ENCODE measurements at regions of chr5 and their contacts with region 1.

Region 1: DNA sequence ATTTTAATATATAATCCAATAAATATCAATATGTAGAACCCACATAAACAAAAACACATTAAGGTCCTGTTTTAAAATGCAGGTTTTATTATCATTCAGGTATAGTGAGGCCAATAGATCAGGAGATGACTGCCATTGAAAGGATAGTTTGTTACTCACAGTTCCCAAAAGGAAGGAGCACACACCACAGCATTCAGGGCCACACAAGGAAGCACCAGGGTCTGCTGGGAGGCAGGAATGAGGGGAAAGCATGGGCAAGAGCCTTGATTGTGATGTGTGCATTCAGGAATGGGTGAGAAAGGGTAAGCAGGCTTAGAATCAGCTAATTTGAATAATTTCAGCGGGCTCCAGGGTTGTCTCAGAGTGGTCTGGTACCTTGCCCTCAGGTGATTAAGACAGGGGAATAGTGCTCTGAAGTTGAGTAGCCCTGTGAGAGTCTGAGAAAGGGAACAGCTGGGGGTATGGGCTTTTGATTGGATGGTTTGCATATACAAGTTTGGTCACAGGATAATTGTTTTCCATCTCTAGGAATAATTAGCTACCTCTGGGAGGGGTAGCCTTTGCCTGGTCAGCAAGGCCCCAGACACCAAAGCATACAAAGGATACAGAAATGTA is 19.8 kb upstream of the OTULIN start:
- DNase-seq: no peak
- CTCF ChIP-seq: no peak

Region 2: DNA sequence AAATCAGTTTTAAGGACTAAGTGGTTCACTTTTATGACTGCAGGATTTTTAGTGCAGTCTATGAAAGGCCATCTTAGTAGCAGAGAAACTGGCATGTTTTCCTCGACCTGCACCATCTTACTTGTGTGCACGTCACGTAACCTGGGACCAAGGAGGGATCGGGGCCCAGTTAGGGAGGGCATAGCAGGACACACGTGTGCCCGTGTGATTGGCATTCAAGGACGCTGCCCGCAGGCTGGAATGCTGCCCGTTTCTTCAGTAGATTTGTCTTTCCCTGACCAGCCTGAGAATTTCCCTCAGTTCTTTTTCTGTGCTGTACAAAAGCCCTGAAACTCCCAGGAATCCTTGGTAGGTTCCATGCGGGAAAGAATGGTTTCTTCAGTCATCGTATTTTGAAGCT is 305.3 kb before region 1 on chr5:
- CTCF ChIA-PET with region 1: interaction called, 13 read pairs
- POLR2A ChIA-PET with region 1: no interaction called
- DNase-seq: no peak
- CTCF ChIP-seq: no peak

Region 3: DNA sequence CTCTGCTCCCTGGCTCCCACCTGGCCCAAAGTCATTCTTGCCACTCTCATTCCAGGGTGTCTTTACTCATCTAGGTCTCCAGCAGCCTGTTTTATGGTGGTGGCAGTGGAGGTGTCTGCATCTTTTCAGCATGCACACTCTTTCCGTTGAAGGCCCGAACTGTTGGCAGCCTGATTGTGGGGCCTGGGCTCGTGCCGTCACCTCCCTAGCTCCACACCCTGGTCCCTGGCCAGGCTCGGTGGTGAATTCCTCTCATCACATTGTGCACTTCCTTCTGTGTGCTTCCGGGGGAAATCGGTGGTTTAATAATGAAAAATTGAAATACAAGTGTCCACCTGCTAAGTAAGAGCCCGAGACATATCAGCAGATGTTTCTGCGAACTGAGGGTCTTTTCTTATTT is 287.3 kb before region 1 on chr5:
- CTCF ChIA-PET with region 1: interaction called, 61 read pairs
- POLR2A ChIA-PET with region 1: no interaction called
- DNase-seq: no peak
- CTCF ChIP-seq: no peak

Region 4: GRCh38 chr5:14374100-14374499 is 270.6 kb before region 1 on chr5:
- CTCF ChIA-PET with region 1: interaction called, 30 read pairs
- POLR2A ChIA-PET with region 1: no interaction called
- DNase-seq: no peak
- CTCF ChIP-seq: no peak

Region 5: DNA sequence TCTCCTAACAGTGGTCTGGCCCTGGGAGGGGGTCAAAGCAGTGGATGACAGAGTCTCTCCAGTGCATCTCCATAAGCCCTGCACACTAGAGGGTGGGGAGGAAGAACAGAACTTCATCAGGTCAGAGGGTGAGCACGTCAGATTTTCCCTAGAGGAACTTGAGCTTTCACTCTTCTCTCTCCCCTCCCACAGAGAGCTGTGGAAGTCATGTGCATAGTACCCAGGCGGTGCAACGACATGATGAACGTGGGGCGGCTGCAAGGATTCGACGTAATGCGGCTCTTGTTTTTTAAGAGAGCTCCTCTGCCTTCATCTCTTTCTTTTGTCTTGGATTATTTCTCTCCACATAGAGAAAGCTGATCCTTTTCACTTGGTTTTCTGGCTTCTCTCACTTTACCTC is 163.4 kb before region 1 on chr5:
- CTCF ChIA-PET with region 1: interaction called, 10 read pairs
- POLR2A ChIA-PET with region 1: no interaction called
- DNase-seq: no peak
- CTCF ChIP-seq: no peak

Region 6: GRCh38 chr5:14608169-14608568 is 36.6 kb before region 1 on chr5:
- CTCF ChIA-PET with region 1: no interaction called
- POLR2A ChIA-PET with region 1: no interaction called
- DNase-seq: no peak
- CTCF ChIP-seq: no peak

Region 7: DNA sequence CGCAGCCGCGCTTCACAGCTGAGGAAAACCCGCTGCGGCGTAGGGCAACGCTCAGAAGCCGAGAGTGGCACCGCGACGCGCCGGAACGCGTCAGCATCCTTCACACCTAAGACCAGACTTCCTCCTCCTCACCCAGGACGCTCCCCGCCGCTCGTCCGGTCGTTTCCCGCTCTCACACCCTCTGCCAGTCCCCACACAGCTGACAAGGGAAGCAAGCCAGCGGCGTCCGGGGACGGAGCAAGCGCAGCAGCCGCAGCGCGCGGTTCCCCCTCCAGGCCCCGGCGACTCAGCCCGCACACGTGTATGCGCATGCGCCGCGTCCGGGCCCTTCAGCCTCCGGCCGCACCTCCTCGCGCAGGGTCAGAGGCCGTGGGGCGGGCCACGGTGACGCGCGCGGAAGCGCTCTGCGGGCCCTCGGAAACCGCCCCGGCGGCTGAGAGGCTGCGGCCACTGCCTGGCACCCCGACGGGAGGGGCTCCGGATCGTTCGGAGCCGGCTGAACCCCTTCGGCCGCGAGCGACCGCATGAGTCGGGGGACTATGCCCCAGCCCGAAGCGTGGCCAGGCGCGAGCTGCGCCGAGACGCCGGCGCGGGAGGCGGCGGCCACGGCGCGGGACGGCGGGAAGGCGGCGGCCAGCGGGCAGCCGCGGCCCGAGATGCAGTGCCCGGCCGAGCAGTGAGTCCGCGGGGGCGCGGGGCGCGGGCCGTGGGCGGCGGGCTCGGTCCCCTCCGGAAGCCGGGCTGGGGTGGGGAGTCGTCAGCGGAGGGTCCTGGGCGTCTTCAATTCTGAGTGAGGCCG is 19.8 kb after region 1 on chr5 and contains the start of gene OTULIN:
- CTCF ChIA-PET with region 1: interaction called, 80 read pairs
- POLR2A ChIA-PET with region 1: no interaction called
- DNase-seq: peak; percentile 97
- CTCF ChIP-seq: no peak

Region 8: GRCh38 chr5:14727428-14727865 is 82.7 kb after region 1 on chr5:
- CTCF ChIA-PET with region 1: no interaction called
- POLR2A ChIA-PET with region 1: no interaction called
- DNase-seq: peak; percentile 77
- CTCF ChIP-seq: peak; percentile 81

Region 9: DNA sequence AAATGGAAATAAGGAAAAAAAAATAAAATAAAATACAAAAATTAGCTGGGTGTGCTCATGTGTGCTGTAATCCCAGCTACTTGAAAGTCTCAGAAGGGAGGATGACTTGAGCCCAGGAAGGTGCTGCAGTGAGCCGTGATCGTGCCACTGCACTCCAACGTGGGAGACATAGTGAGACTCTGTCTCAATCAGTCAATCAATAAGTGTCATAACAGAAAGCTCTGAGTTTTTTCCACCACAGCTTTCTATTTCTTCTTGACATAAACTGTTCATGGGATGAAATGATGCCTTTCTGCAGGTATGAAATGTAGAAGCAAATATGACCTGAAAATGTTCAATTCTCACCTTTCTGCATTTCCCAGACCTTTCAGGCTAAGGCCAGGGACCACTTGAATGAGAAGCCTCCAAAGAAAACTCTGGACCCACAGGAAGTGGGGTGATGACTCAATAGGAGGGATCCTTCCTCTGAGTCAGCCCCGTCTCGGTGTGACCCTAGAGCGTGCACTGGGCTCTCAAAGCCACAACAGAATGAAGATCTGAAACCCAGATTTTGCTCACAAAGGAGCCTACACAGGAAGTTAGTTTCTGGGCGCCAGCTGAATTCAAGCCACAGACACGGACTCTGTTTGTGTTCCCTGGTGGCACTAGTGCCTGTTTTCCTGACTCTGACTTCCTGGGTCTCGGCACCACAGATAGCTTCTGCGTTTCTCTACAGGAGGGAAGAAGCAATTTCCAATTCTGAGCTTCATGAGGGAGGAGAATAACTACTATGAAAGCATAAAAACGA is 164.8 kb after region 1 on chr5:
- CTCF ChIA-PET with region 1: no interaction called
- POLR2A ChIA-PET with region 1: no interaction called
- DNase-seq: peak; percentile 75
- CTCF ChIP-seq: no peak